Colonic mucosa (tissue), 4 donors: ENCODE measurements at regions of chr3 and their contacts with region 1.

Region 1: DNA sequence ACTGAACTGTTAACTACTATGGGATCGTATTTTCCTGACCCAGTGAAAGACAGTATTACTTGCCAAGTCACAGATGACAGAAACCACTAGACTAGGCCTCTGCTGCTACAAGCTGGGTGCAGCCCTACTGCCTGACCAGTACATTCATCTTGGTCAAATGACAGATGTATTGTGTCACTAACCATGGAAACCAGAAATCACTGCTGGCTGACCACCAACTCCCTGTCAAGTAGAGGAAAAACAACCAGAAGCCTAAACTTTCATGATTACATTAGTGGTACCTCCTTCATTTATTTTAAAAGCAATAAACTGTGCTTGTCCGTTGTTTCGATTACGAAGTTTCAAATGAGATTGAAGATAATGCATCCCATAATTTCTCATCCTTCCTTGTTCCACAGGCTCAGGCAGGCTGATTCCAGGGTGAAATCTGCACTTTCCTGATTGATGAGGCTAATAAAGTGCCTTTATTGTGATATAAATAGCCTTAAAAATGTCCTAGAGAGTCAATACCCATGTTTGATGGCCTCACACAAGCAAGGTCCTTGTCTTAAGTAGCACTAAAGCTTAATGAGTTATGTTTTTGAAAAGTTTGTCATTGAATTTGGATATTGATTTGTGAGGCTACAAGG is 309.7 kb downstream of the LSAMP start:
- DNase-seq: peak; percentile 22
- H3K4me3 ChIP-seq: no peak overlapping the region
- H3K27ac ChIP-seq: no peak overlapping the region
- H3K4me1 ChIP-seq: no peaks in the 10 kb centered on the region
- H3K27me3 ChIP-seq: no peaks in the 10 kb centered on the region
- CTCF ChIP-seq: no peak

Region 2: GRCh38 chr3:116757315-116757714 is 621.7 kb after region 1 on chr3:
- intact Hi-C with region 1: loop called (anchors 5 kb)
- DNase-seq: no peak
- H3K4me3 ChIP-seq: no peak overlapping the region
- H3K27ac ChIP-seq: no peak overlapping the region
- H3K4me1 ChIP-seq: no peaks in the 10 kb centered on the region
- H3K27me3 ChIP-seq: no peaks in the 10 kb centered on the region
- CTCF ChIP-seq: no peak